Caco-2 (cell line): ENCODE measurements at regions of chr12 and their contacts with region 1.

Region 1: DNA sequence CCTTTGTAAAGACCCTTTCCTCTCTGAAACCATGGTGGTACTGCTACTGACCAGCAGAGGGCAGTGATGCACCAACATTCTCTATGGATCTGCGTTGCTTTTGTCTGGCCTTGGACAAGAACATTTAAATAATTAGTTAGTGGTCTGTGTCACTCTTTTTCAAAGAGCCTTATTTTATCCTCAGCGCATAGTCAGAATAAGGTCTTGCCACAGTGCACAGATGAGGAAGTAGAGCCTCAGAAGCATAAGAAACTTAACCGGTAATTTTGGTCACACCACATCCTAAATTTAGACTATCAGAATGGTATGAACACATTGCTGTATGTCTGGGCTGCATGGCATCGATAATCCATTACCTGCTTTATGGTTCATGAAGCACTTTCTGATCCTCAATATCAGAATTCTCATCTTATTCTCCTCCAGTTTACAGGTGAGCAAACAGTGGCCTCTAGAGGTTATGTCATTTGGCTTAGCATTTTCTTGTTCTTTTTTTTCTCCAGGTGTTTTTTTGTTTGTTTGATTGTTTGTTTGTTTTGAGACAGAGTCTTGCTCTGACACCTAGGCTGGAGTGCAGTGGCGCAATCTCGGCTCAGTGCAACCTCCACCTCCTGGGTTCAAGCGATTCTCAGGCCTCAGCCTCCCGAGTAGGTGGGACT is 23.7 kb upstream of the IFT81 start:
- DNase-seq: peak; percentile 65 to 75
- H3K4me3 ChIP-seq: no peak overlapping the region
- H3K4me3 Mint-ChIP-seq: no peak overlapping the region
- H3K27ac Mint-ChIP-seq: no peak overlapping the region
- H3K4me1 ChIP-seq: peaks cover 3% of the 10 kb centered on the region; the same call in 1 of the 2 replicates
- H3K4me1 Mint-ChIP-seq: no peaks in the 10 kb centered on the region
- H3K27me3 ChIP-seq: no peaks in the 10 kb centered on the region
- H3K27me3 Mint-ChIP-seq: no peaks in the 10 kb centered on the region
- CTCF ChIP-seq: peak; percentile 86 to 91

Region 2: GRCh38 chr12:110183386-110183785 is 82.9 kb after region 1 on chr12:
- CTCF ChIA-PET with region 1: no interaction called
- POLR2A ChIA-PET with region 1: no interaction called
- intact Hi-C with region 1: loop called (anchors 2 kb)
- DNase-seq: no peak
- H3K4me3 ChIP-seq: no peak overlapping the region
- H3K4me3 Mint-ChIP-seq: no peak overlapping the region
- H3K27ac Mint-ChIP-seq: no peak overlapping the region
- H3K4me1 ChIP-seq: no peaks in the 10 kb centered on the region
- H3K4me1 Mint-ChIP-seq: no peaks in the 10 kb centered on the region
- H3K27me3 ChIP-seq: no peaks in the 10 kb centered on the region
- H3K27me3 Mint-ChIP-seq: no peaks in the 10 kb centered on the region
- CTCF ChIP-seq: no peak

Region 3: GRCh38 chr12:110224379-110225304 is 124.2 kb after region 1 on chr12:
- CTCF ChIA-PET with region 1: no interaction called
- POLR2A ChIA-PET with region 1: no interaction called
- intact Hi-C with region 1: loop called (anchors 1 kb)
- DNase-seq: no peak
- H3K4me3 ChIP-seq: no peak overlapping the region
- H3K4me3 Mint-ChIP-seq: no peak overlapping the region
- H3K27ac Mint-ChIP-seq: no peak overlapping the region
- H3K4me1 ChIP-seq: peaks cover 24% of the 10 kb centered on the region
- H3K4me1 Mint-ChIP-seq: peaks cover 6% of the 10 kb centered on the region
- H3K27me3 ChIP-seq: no peaks in the 10 kb centered on the region
- H3K27me3 Mint-ChIP-seq: no peaks in the 10 kb centered on the region
- CTCF ChIP-seq: peak; percentile 1 to 57

Region 4: GRCh38 chr12:110338754-110339153 is 238.3 kb after region 1 on chr12:
- CTCF ChIA-PET with region 1: no interaction called
- POLR2A ChIA-PET with region 1: no interaction called
- intact Hi-C with region 1: loop called (anchors 1 kb)
- DNase-seq: no peak
- H3K4me3 ChIP-seq: no peak overlapping the region
- H3K4me3 Mint-ChIP-seq: no peak overlapping the region
- H3K27ac Mint-ChIP-seq: no peak overlapping the region
- H3K4me1 ChIP-seq: no peaks in the 10 kb centered on the region
- H3K4me1 Mint-ChIP-seq: no peaks in the 10 kb centered on the region
- H3K27me3 ChIP-seq: no peaks in the 10 kb centered on the region
- H3K27me3 Mint-ChIP-seq: no peaks in the 10 kb centered on the region
- CTCF ChIP-seq: peak in 1 of 2 experiments; percentile 17